Activated CD8-positive, alpha-beta memory T cell treated with anti-CD3 and anti-CD28 coated beads, Interleukin-2, amount 10 ng/mL, durations not matched to agents 7 days and 5 days (primary cell): ENCODE measurements at regions of chr9 and their contacts with region 1.

Region 1: DNA sequence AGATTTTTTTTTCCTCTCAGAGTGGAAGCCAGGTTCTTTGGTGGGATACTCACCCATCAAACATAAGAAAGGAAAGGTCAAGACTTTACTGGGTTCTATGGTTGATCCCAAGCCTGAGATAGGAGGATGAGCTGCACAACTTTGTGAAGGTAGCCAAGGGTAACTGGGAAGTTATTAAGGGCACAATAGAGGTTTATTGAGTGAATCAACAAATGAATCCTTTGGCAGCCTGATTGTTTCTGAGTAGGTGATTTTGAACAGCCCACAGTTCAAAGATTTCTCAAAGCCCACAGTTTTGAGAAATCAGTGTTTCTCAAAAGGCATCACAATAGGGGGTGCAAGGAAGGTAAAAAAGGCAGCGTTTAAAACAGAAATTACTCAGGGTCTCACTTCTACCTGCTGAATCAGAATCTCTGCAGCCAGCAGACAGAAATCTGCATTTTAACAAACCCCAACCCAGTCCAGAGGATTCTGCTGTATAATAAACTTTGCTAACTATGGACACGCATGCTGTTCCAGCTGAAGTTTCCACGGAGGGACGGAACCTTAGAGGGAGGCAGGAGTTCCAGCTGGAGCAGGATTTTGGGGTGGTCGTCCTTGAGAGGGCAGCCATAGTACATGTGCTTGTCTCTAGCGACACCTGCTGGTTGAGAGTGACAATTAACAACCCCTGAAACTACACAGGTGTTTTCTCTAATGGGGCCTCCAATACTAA is 32.7 kb upstream of the FSD1L start:
- DNase-seq: peak; percentile 73
- ATAC-seq: peak; percentile 87
- H3K4me3 Mint-ChIP-seq: no peak overlapping the region
- H3K27ac Mint-ChIP-seq: no peak overlapping the region
- H3K4me1 Mint-ChIP-seq: peaks cover 16% of the 10 kb centered on the region
- H3K27me3 Mint-ChIP-seq: peaks cover 45% of the 10 kb centered on the region

Region 2: DNA sequence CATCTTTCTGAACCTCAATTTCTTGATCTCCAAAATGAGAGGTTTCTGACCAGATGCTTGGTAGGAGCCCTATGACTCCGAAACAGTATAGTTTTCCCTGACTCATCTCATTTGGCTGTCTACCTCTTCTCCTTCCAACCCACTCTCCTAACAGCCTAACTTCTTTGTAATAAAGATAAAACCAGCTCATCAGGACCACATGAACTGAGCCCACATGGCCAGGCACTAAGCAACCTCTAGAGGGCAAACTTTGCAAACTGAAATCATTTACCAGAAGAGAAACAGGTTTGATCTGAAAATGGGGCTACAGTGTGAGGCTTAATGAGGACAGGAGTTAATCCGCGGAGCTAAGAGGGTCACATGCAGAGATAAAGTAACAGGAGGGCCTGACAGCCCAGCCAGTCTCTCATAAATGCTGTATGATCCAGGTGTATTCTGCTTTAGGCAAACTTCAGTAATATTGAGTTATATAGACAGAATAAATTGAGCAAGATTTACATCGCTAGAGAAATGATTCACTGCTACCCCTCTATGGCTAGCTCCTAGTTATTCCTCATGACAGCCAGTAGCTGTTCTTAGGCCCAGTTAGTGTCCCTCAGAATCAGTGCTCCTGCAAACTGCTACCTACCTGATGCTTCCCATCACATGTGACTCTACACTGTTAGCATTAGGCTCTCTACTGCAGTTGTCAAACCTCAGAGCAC is 551.8 kb before region 1 on chr9:
- CTCF ChIA-PET with region 1: interaction called, 24 read pairs
- DNase-seq: peak; percentile 61
- ATAC-seq: peak; percentile 83
- H3K4me3 Mint-ChIP-seq: no peak overlapping the region
- H3K27ac Mint-ChIP-seq: no peak overlapping the region
- H3K4me1 Mint-ChIP-seq: peaks cover 1% of the 10 kb centered on the region
- H3K27me3 Mint-ChIP-seq: no peaks in the 10 kb centered on the region

Region 3: DNA sequence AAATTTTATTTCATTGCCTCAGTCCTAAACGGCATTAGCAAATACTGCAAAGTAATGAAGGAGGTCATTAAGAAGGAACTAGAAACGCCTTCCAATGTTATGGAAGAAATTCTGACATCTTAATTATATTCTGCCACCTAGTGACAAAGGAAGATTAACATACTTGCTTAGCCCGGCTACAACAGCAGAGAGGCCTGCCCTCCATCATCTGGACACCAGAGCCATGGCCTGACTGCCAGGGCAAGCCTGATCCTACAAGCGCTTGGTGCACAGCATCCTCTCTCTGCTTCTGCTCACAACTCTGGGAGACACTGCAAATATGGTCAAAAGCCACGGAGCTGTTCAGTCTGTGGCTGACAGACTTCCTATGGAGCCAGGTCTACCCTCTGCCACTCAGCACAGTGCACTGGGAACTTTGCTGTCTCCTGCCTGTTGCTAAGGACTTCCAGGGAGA is 257.9 kb before region 1 on chr9:
- CTCF ChIA-PET with region 1: interaction called, 24 read pairs
- DNase-seq: peak; percentile 44
- ATAC-seq: peak; percentile 64
- H3K4me3 Mint-ChIP-seq: no peak overlapping the region
- H3K27ac Mint-ChIP-seq: no peak overlapping the region
- H3K4me1 Mint-ChIP-seq: peaks cover 2% of the 10 kb centered on the region
- H3K27me3 Mint-ChIP-seq: peaks cover 7% of the 10 kb centered on the region

Region 4: DNA sequence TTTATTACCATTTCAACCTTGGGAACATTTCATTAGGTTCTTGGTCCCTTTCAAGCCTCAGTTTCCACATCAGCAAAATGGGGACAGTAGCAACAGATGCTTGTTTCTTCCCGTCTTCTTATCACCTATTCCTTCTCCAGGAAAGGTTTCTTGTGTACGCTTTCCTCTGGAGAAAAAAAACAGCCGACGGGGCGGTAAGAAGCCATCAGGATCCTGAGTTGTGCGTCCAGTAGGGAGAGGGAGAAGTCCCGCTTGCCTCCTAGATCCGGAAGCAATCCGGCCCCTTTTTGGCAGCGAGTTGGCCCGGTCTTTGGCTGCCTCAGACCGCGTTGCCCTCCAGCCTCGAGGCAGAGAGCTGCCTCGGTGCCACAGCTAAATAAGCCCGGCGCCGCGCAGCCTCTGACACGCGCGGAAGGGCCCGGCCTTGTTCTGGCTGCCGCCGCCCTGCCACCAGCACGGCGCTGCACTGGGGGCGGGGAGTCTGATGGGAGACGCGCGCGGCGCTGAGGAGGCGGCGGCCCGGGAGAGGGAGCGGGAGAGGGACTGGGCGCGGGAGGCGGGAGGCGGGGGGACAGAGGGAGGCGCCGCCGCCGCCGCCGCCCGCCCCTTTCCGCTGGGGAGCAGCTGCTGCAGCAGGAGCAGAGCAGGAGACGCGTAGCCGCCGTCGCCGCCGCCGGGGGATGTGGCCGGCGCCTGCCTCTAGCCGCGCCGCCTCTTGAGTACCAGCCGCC is 170.9 kb before region 1 on chr9 and contains the start of gene SLC44A1:
- CTCF ChIA-PET with region 1: interaction called, 10 read pairs
- DNase-seq: peak; percentile 94
- ATAC-seq: peak; percentile 96
- H3K4me3 Mint-ChIP-seq: peak within 1 kb of the TSS; percentile 89
- H3K27ac Mint-ChIP-seq: peak within 1 kb of the TSS; percentile 68
- H3K4me1 Mint-ChIP-seq: peaks cover 21% of the 10 kb centered on the region
- H3K27me3 Mint-ChIP-seq: peaks cover 76% of the 10 kb centered on the region
- total RNA-seq, gene SLC44A1: 4.9 to 10.3 TPM

Region 5: GRCh38 chr9:105392531-105392930 is 22.6 kb before region 1 on chr9:
- CTCF ChIA-PET with region 1: no interaction called
- DNase-seq: no peak
- ATAC-seq: no peak
- H3K4me3 Mint-ChIP-seq: no peak overlapping the region
- H3K27ac Mint-ChIP-seq: no peak overlapping the region
- H3K4me1 Mint-ChIP-seq: peaks cover 4% of the 10 kb centered on the region
- H3K27me3 Mint-ChIP-seq: peaks cover 34% of the 10 kb centered on the region

Region 6: GRCh38 chr9:105496826-105497225 is 81.7 kb after region 1 on chr9:
- CTCF ChIA-PET with region 1: no interaction called
- DNase-seq: no peak
- ATAC-seq: no peak
- H3K4me3 Mint-ChIP-seq: no peak overlapping the region
- H3K27ac Mint-ChIP-seq: no peak overlapping the region
- H3K4me1 Mint-ChIP-seq: no peaks in the 10 kb centered on the region
- H3K27me3 Mint-ChIP-seq: no peaks in the 10 kb centered on the region